ENCODE measurements at regions of chr5 and their contacts with region 1.

Region 1: GRCh38 chr5:23820765-23821471 is 313.5 kb downstream of the PRDM9 start:
- DNase-seq: no peak
- ATAC-seq: no peak
- H3K4me3 Mint-ChIP-seq: no peak overlapping the region
- H3K27ac Mint-ChIP-seq: no peak overlapping the region
- H3K4me1 Mint-ChIP-seq: no peaks in the 10 kb centered on the region
- H3K27me3 Mint-ChIP-seq: no peaks in the 10 kb centered on the region

Region 2: DNA sequence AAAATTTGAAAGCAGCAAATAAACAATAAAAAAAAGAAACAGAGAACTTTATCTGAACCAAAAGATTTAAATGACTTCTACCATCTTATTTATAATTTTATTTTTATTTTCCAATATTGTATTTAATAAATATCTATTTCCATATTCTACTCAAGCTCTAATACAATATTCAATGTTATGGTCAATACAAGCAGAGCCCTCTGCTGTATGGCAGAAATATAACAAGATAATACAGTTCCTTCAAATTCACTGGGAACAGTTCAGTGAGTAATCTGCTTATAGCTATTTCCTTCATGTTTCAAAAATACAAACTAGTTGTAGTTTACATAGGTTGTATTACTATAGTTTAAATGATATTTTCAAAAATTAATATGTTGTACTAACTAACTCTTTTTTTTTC is 19.2 kb after region 1 on chr5:
- CTCF ChIA-PET with region 1: no interaction called
- POLR2A ChIA-PET with region 1: no interaction called
- intact Hi-C with region 1: no loop called
- DNase-seq: no peak
- ATAC-seq: no peak
- H3K4me3 Mint-ChIP-seq: no peak overlapping the region
- H3K27ac Mint-ChIP-seq: no peak overlapping the region
- H3K4me1 Mint-ChIP-seq: no peaks in the 10 kb centered on the region
- H3K27me3 Mint-ChIP-seq: no peaks in the 10 kb centered on the region

Region 3: DNA sequence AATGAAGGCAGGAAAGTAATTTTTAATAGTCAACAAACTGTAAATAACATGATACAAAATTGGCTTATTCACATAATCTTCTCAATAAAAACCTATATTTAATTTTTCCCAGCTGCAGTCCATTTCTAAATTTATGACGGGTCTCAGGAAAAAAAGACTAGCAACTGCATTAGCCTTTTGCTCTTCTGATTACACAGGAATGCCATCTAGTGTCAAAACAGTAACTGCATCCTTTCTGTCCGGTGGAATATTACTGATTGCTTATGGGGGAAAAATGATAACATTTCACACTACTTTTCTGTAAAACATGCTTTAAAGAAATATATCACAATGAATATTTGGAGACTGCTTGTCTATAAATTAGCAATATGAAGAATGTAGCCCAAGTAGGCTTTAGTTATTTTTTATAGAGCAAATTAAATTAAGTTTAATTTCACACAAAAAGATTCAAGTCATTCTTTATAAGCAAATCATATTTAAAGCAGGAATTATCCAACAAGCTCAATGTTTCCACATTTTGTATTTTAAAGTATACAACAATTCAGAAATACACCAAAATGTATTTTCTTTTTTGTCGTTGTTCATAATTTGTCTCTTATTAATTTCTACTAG is 289.2 kb after region 1 on chr5:
- CTCF ChIA-PET with region 1: no interaction called
- POLR2A ChIA-PET with region 1: no interaction called
- intact Hi-C with region 1: loop called in 1 of 2 experiments (anchors 5 kb)
- DNase-seq: no peak
- ATAC-seq: no peak
- H3K4me3 Mint-ChIP-seq: no peak overlapping the region
- H3K27ac Mint-ChIP-seq: no peak overlapping the region
- H3K4me1 Mint-ChIP-seq: no peaks in the 10 kb centered on the region
- H3K27me3 Mint-ChIP-seq: no peaks in the 10 kb centered on the region

Measured in activated CD4-positive, alpha-beta T cell treated with anti-CD3 and anti-CD28 coated beads for 36 hours (primary cell).